ENCODE measurements at regions of chr12 and their contacts with region 1.

Region 1: GRCh38 chr12:1690578-1691122 is at the start of gene ADIPOR2:
- DNase-seq: peak; percentile 84 to 95 (median 92)
- H3K4me3 ChIP-seq: peak within 1 kb of the TSS; percentile 62 to 100 (median 95)
- H3K27ac ChIP-seq: peak within 1 kb of the TSS; percentile 58 to 97 (median 92)
- H3K27me3 ChIP-seq: peaks cover 0 to 3% (median 0%) of the 10 kb centered on the region in 45 donors
- CTCF ChIP-seq: peak in 17 of 56 donors; percentile 6 to 43 (median 23)
- total RNA-seq, gene ADIPOR2: 39.0 to 240 (median 95.0) TPM

Region 2: GRCh38 chr12:1661553-1662335 is 28.9 kb before region 1 on chr12:
- intact Hi-C with region 1: loop called (anchors 1 to 2 kb)
- DNase-seq: peak; percentile 56 to 95 (median 92)
- H3K4me3 ChIP-seq: peak overlapping the region; percentile 48 to 85 (median 71)
- H3K27ac ChIP-seq: peak overlapping the region; percentile 72 to 100 (median 98)
- H3K27me3 ChIP-seq: no peaks in the 10 kb centered on the region
- CTCF ChIP-seq: peak in 16 of 56 donors; percentile 9 to 43 (median 20)

Measured in dorsolateral prefrontal cortex (tissue), 120 donors.